ENCODE measurements at regions of chr9 and their contacts with region 1.

Region 1: GRCh38 chr9:71270554-71270953 is 149.1 kb upstream of the TRPM3 start:
- DNase-seq: no peak
- ATAC-seq: no peak
- H3K4me3 ChIP-seq: no peak overlapping the region
- H3K27ac ChIP-seq: no peak overlapping the region
- H3K4me1 ChIP-seq: no peaks in the 10 kb centered on the region
- H3K27me3 ChIP-seq: no peaks in the 10 kb centered on the region; a peak in 1 of 4 replicates
- CTCF ChIP-seq: no peak
- EP300 ChIP-seq: no peak
- POLR2A ChIP-seq: no peak
- RAD21 ChIP-seq: no peak

Region 2: GRCh38 chr9:71223953-71224538 is 46.5 kb before region 1 on chr9:
- CTCF ChIA-PET with region 1: no interaction called
- POLR2A ChIA-PET with region 1: no interaction called
- RAD21 ChIA-PET with region 1: no interaction called
- SMC1A ChIA-PET with region 1: no interaction called
- in situ Hi-C with region 1: loop called (anchors 5 kb)
- intact Hi-C with region 1: no loop called
- DNase-seq: no peak
- ATAC-seq: no peak
- H3K4me3 ChIP-seq: no peak overlapping the region
- H3K27ac ChIP-seq: no peak overlapping the region
- H3K4me1 ChIP-seq: no peaks in the 10 kb centered on the region
- H3K27me3 ChIP-seq: no peaks in the 10 kb centered on the region
- CTCF ChIP-seq: no peak
- EP300 ChIP-seq: no peak
- POLR2A ChIP-seq: no peak
- RAD21 ChIP-seq: no peak

Region 3: GRCh38 chr9:71295928-71296327 is 25.4 kb after region 1 on chr9:
- CTCF ChIA-PET with region 1: no interaction called
- POLR2A ChIA-PET with region 1: no interaction called
- RAD21 ChIA-PET with region 1: no interaction called
- SMC1A ChIA-PET with region 1: no interaction called
- in situ Hi-C with region 1: no loop called
- intact Hi-C with region 1: no loop called
- DNase-seq: no peak
- ATAC-seq: no peak
- H3K4me3 ChIP-seq: no peak overlapping the region
- H3K27ac ChIP-seq: no peak overlapping the region
- H3K4me1 ChIP-seq: no peaks in the 10 kb centered on the region
- H3K27me3 ChIP-seq: no peaks in the 10 kb centered on the region
- CTCF ChIP-seq: no peak
- EP300 ChIP-seq: no peak
- POLR2A ChIP-seq: no peak
- RAD21 ChIP-seq: no peak

Measured in GM12878 (cell line).